CD8-positive, alpha-beta memory T cell (primary cell): ENCODE measurements at regions of chr19 and their contacts with region 1.

Region 1: GRCh38 chr19:13784731-13785452 is 10.4 kb upstream of the ZSWIM4 start:
- DNase-seq: peak; percentile 59 to 82 (median 62)
- H3K4me3 ChIP-seq: no peak overlapping the region
- H3K4me3 Mint-ChIP-seq: peak overlapping the region; percentile 9 to 60 (median 42)
- H3K27ac ChIP-seq: no peak overlapping the region
- H3K27ac Mint-ChIP-seq: peak overlapping the region in 6 of 8 donors; percentile 24 to 88 (median 76)
- H3K4me1 ChIP-seq: peaks cover 40% of the 10 kb centered on the region
- H3K4me1 Mint-ChIP-seq: peaks cover 24 to 42% (median 28%) of the 10 kb centered on the region in 3 donors
- H3K27me3 ChIP-seq: no peaks in the 10 kb centered on the region
- H3K27me3 Mint-ChIP-seq: no peaks in the 10 kb centered on the region

Region 2: GRCh38 chr19:12350890-12351197 is 1434.0 kb before region 1 on chr19:
- CTCF ChIA-PET with region 1: no interaction called
- POLR2A ChIA-PET with region 1: no interaction called
- DNase-seq: no peak
- H3K4me3 ChIP-seq: no peak overlapping the region
- H3K4me3 Mint-ChIP-seq: no peak overlapping the region
- H3K27ac ChIP-seq: no peak overlapping the region
- H3K27ac Mint-ChIP-seq: no peak overlapping the region
- H3K4me1 ChIP-seq: no peaks in the 10 kb centered on the region
- H3K4me1 Mint-ChIP-seq: no peaks in the 10 kb centered on the region
- H3K27me3 ChIP-seq: no peaks in the 10 kb centered on the region
- H3K27me3 Mint-ChIP-seq: no peaks in the 10 kb centered on the region

Region 3: GRCh38 chr19:13621413-13621812 is 163.5 kb before region 1 on chr19:
- CTCF ChIA-PET with region 1: no interaction called
- POLR2A ChIA-PET with region 1: no interaction called
- DNase-seq: no peak
- H3K4me3 ChIP-seq: no peak overlapping the region
- H3K4me3 Mint-ChIP-seq: no peak overlapping the region
- H3K27ac ChIP-seq: no peak overlapping the region
- H3K27ac Mint-ChIP-seq: no peak overlapping the region
- H3K4me1 ChIP-seq: no peaks in the 10 kb centered on the region
- H3K4me1 Mint-ChIP-seq: no peaks in the 10 kb centered on the region
- H3K27me3 ChIP-seq: peaks cover 5% of the 10 kb centered on the region
- H3K27me3 Mint-ChIP-seq: peaks cover 47 to 66% of the 10 kb centered on the region in 2 donors

Region 4: DNA sequence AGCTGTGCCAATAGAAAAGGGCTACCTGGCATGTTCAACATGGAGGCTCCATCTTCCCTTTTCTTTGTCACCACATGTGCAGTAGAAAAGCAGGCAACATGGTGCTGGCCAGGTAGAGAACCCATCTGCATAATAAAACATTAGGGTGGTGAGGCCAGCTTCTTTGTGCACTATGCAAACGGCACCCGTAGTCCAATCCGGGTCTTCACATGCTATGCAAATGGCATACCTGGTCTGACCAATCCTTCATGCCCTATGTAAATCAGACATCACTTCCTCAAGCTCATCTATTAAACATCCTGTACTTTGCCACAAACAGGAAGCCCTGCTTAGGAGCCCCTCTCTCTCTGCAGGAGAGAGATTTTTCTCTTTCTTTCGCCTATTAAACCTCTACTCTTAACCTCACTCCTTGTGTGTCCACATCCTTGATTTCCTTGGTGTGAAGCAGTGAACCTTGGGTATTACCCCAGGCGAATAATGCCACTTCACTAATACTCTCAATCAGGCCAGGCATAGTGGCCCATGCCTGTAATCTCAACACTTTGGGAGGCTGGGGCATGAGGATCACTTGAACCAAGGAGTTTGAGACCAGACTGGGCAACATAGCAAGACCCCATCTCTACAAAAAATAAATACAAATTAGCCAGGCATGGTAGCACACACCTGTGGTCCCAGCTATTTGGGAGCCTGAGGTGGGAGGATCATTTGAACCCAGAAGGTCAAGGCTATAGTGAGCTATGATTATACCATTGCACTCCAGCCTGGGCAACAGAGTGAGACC is 131.9 kb before region 1 on chr19:
- CTCF ChIA-PET with region 1: no interaction called
- POLR2A ChIA-PET with region 1: no interaction called
- DNase-seq: no peak
- H3K4me3 ChIP-seq: no peak overlapping the region
- H3K4me3 Mint-ChIP-seq: no peak overlapping the region
- H3K27ac ChIP-seq: no peak overlapping the region
- H3K27ac Mint-ChIP-seq: peak overlapping the region in 2 of 8 donors; percentile 2 to 32
- H3K4me1 ChIP-seq: peaks cover 8% of the 10 kb centered on the region
- H3K4me1 Mint-ChIP-seq: peaks cover 6 to 17% (median 8%) of the 10 kb centered on the region in 3 donors
- H3K27me3 ChIP-seq: no peaks in the 10 kb centered on the region
- H3K27me3 Mint-ChIP-seq: peaks cover 1 to 16% of the 10 kb centered on the region in 2 donors

Region 5: GRCh38 chr19:13774217-13775191 is 10.4 kb before region 1 on chr19 and contains the start of gene C19orf53:
- CTCF ChIA-PET with region 1: interaction called, 10 read pairs
- POLR2A ChIA-PET with region 1: interaction called, 7 read pairs
- DNase-seq: peak; percentile 80 to 88 (median 81)
- H3K4me3 ChIP-seq: peak within 1 kb of the TSS; percentile 87
- H3K4me3 Mint-ChIP-seq: peak within 1 kb of the TSS; percentile 90 to 100 (median 99)
- H3K27ac ChIP-seq: peak within 1 kb of the TSS; percentile 84
- H3K27ac Mint-ChIP-seq: peak within 1 kb of the TSS; percentile 80 to 100 (median 98)
- H3K4me1 ChIP-seq: peaks cover 20% of the 10 kb centered on the region
- H3K4me1 Mint-ChIP-seq: peaks cover 22 to 28% (median 28%) of the 10 kb centered on the region in 3 donors
- H3K27me3 ChIP-seq: no peaks in the 10 kb centered on the region
- H3K27me3 Mint-ChIP-seq: no peaks in the 10 kb centered on the region
- total RNA-seq, gene C19orf53: 131 to 163 TPM

Region 6: DNA sequence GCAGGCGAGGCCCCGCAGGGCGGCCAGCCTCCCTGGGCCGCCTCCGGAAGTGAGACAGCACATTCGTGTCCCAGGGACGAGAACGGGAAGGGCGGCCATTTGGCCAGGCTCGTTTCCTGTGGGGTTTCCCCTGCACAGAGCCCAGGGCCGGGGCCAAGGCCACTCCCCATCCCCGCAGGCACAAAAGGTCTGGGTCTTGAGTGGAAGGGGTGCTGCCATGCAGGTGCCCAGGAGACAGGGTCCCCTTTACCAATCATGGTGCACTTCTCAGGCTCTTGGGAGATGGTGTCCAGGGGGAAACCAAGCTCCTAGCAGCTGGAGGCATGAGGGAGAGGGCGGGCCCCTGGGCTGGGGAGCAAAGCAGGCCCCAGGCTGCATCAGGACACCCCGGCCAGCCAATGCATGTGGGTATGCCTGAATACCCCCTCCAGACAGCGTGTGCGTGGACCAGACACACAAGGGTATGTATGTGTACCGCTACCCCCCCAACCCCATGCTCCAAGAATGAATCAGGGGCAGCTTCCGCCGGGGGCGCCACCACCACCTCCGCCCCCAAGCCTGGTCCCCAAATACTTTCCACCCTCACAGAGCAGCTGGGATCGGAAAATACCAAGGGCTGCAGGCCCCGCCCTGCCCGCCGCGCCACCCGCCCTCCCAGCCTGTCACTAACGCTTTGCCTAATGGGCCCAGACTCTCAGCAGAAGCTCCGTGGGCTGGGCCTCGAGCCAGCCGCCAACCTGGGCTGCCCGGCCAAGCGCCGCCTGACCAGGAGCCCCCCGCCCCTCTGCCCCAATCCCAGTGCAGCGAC is 54.4 kb after region 1 on chr19:
- CTCF ChIA-PET with region 1: interaction called, 31 read pairs
- POLR2A ChIA-PET with region 1: interaction called, 20 read pairs
- DNase-seq: peak; percentile 73 to 95 (median 80)
- H3K4me3 ChIP-seq: peak overlapping the region; percentile 86
- H3K4me3 Mint-ChIP-seq: peak overlapping the region; percentile 92 to 98 (median 94)
- H3K27ac ChIP-seq: peak overlapping the region; percentile 99
- H3K27ac Mint-ChIP-seq: peak overlapping the region; percentile 97 to 100 (median 100)
- H3K4me1 ChIP-seq: peaks cover 82% of the 10 kb centered on the region
- H3K4me1 Mint-ChIP-seq: peaks cover 47 to 76% (median 51%) of the 10 kb centered on the region in 3 donors
- H3K27me3 ChIP-seq: no peaks in the 10 kb centered on the region
- H3K27me3 Mint-ChIP-seq: peaks cover 0 to 38% of the 10 kb centered on the region in 2 donors

Region 7: DNA sequence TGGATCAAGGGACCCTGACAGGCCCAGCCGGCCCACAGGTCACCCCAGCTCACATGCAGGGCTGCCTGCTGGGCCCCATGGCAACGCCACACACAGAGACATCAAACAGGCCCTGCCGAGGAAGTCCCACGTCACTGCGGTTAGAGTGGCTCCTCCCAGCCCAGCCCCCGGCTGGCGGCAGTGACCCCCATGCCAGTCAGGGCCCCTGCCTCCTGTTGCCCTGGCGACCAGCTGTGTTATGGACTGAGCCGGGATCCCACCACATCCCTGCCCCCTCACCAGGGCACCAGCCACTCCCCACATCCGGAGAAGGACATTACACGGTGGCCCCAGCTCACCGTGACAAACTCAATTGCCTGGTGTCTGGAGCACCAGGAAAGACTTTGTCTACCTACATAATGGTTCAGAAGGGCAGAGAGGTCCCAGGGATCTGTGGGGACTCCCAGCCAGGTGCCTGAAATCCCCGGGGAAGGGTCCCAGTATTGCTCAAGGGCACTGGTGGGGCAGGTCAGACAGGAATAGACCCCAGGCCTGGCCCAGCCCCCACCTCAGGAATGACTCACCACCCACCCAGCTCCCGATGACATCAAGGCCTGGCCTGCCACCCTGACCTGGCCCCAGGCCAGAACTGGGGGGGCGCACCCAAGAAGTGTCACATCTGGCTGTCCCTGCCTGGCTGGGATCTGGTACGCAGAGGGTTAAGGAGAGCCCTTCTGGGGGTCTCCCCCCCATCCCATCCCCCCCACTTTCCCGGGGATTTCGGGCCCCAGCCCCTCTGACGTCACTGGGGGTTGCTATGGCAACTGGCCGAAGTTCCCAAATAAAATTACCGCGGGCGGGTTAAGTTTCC is 61.9 kb after region 1 on chr19:
- CTCF ChIA-PET with region 1: interaction called, 14 read pairs
- POLR2A ChIA-PET with region 1: interaction called, 39 read pairs
- DNase-seq: peak; percentile 94 to 100 (median 99)
- H3K4me3 ChIP-seq: peak overlapping the region; percentile 70
- H3K4me3 Mint-ChIP-seq: peak overlapping the region; percentile 83 to 92 (median 89)
- H3K27ac ChIP-seq: peak overlapping the region; percentile 100
- H3K27ac Mint-ChIP-seq: peak overlapping the region; percentile 99 to 100 (median 100)
- H3K4me1 ChIP-seq: peaks cover 62% of the 10 kb centered on the region
- H3K4me1 Mint-ChIP-seq: peaks cover 43 to 81% (median 45%) of the 10 kb centered on the region in 3 donors
- H3K27me3 ChIP-seq: no peaks in the 10 kb centered on the region
- H3K27me3 Mint-ChIP-seq: peaks cover 0 to 18% of the 10 kb centered on the region in 2 donors